ENCODE measurements at regions of chr1 and their contacts with region 1.

Region 1: DNA sequence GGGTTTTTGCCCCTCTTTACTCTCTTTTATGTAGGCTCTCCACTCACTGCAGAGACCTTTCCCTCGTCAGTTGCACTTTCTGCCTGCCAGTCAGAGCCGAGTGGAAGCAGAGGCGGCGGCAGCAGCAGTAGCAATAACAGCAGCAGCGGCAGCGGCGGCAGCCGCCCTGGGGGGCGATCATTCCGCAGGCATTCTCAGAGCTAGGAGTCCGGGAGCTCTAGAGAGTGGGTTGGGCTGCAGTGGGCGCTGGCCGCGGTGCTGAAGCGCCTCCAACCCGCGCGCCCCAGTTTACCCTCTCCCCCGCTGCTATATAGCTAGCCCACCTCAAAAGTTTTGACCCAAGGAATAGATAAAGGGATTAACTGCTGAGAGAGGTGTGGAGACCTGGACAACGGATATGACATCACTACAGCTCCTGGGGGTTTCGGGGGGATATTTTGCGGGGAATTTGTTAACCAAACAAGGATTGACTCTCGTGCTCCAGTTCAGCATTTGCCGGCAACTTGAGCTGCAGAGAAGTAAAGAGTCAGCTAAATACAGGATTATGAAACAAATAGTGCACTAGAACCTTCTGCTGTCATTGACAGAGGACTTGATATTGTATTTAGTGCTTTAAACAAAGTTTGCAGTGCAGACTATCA is at the start of gene OLFM3:
- DNase-seq: peak; percentile 94
- H3K4me3 ChIP-seq: peak within 1 kb of the TSS; percentile 74
- H3K27ac ChIP-seq: peak within 1 kb of the TSS; percentile 87
- H3K4me1 ChIP-seq: peaks cover 9% of the 10 kb centered on the region
- H3K27me3 ChIP-seq: no peaks in the 10 kb centered on the region
- CTCF ChIP-seq: no peak
- total RNA-seq, gene OLFM3: 85.0 and 88.7 TPM in 2 replicates

Region 2: GRCh38 chr1:101506541-101507164 is 490.3 kb before region 1 on chr1:
- CTCF ChIA-PET with region 1: no interaction called
- POLR2A ChIA-PET with region 1: no interaction called
- intact Hi-C with region 1: loop called (anchors 10 kb)
- DNase-seq: peak; percentile 75
- H3K4me3 ChIP-seq: no peak overlapping the region
- H3K27ac ChIP-seq: no peak overlapping the region
- H3K4me1 ChIP-seq: no peaks in the 10 kb centered on the region
- H3K27me3 ChIP-seq: no peaks in the 10 kb centered on the region
- CTCF ChIP-seq: peak; percentile 82

Region 3: DNA sequence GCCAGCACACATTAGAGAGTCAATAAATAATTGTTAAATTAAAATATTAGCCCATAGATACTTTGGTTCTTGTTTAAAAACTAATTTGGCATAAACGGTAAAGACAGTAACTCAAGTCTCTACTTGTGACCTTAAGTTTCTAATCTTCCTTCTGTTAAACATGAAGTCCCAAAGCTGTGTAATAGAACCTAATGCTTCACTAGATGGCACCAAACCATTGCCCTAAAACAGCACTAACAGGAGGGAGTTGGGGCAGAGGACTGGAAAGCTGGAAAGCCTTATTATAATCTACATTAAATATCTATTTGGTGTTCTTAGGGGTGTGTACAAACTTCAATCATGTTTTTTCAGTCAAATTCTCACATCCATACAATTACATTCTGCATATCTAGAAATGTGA is 176.9 kb before region 1 on chr1:
- CTCF ChIA-PET with region 1: interaction called, 6 read pairs
- POLR2A ChIA-PET with region 1: no interaction called
- intact Hi-C with region 1: loop called (anchors 1 kb)
- DNase-seq: peak; percentile 89
- H3K4me3 ChIP-seq: no peak overlapping the region
- H3K27ac ChIP-seq: peak overlapping the region; percentile 12
- H3K4me1 ChIP-seq: peaks cover 61% of the 10 kb centered on the region
- H3K27me3 ChIP-seq: no peaks in the 10 kb centered on the region
- CTCF ChIP-seq: peak; percentile 85

Region 4: GRCh38 chr1:102186536-102186935 is 189.6 kb after region 1 on chr1:
- CTCF ChIA-PET with region 1: interaction called, 9 read pairs
- POLR2A ChIA-PET with region 1: interaction called, 3 read pairs
- intact Hi-C with region 1: loop called (anchors 1 kb)
- DNase-seq: peak; percentile 52
- H3K4me3 ChIP-seq: no peak overlapping the region
- H3K27ac ChIP-seq: peak overlapping the region; percentile 97
- H3K4me1 ChIP-seq: peaks cover 77% of the 10 kb centered on the region
- H3K27me3 ChIP-seq: no peaks in the 10 kb centered on the region
- CTCF ChIP-seq: no peak

Region 5: GRCh38 chr1:102970498-102971078 is 973.6 kb after region 1 on chr1:
- CTCF ChIA-PET with region 1: no interaction called
- POLR2A ChIA-PET with region 1: no interaction called
- intact Hi-C with region 1: loop called (anchors 10 kb)
- DNase-seq: peak; percentile 82
- H3K4me3 ChIP-seq: no peak overlapping the region
- H3K27ac ChIP-seq: no peak overlapping the region
- H3K4me1 ChIP-seq: no peaks in the 10 kb centered on the region
- H3K27me3 ChIP-seq: no peaks in the 10 kb centered on the region
- CTCF ChIP-seq: peak; percentile 76

Measured in A673 (cell line).